Activated CD4-positive, alpha-beta T cell treated with anti-CD3 and anti-CD28 coated beads for 36 hours (primary cell): ENCODE measurements at regions of chr4 and their contacts with region 1.

Region 1: GRCh38 chr4:128917781-128918180 is 108.3 kb downstream of the JADE1 start:
- DNase-seq: no peak
- ATAC-seq: no peak
- H3K4me3 Mint-ChIP-seq: no peak overlapping the region
- H3K27ac Mint-ChIP-seq: no peak overlapping the region
- H3K4me1 Mint-ChIP-seq: peaks cover 14% of the 10 kb centered on the region
- H3K27me3 Mint-ChIP-seq: no peaks in the 10 kb centered on the region

Region 2: DNA sequence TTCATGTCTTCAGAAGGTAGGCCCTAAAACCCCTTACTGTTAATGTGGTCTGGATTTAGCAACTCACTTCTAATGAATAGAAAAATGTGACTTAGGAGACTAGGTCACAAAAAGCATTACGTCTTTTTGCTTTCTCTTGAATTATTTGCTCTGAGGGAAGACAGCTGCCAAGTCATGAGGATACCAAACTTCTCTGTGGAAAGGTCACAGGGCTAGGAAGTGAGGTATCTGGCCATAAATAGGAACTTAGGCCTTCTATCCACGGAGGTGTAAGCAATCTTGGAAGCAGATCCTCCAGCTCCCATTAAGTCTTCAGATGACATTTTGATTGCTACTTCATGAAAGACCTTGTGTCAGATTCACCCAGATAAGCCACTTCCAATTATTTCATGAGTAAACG is 12.3 kb after region 1 on chr4:
- CTCF ChIA-PET with region 1: no interaction called
- POLR2A ChIA-PET with region 1: interaction called, 10 read pairs
- intact Hi-C with region 1: no loop called
- DNase-seq: no peak
- ATAC-seq: no peak
- H3K4me3 Mint-ChIP-seq: no peak overlapping the region
- H3K27ac Mint-ChIP-seq: no peak overlapping the region
- H3K4me1 Mint-ChIP-seq: no peaks in the 10 kb centered on the region
- H3K27me3 Mint-ChIP-seq: no peaks in the 10 kb centered on the region

Region 3: GRCh38 chr4:128942607-128943006 is 24.8 kb after region 1 on chr4:
- CTCF ChIA-PET with region 1: no interaction called
- POLR2A ChIA-PET with region 1: no interaction called
- intact Hi-C with region 1: no loop called
- DNase-seq: no peak
- ATAC-seq: no peak
- H3K4me3 Mint-ChIP-seq: no peak overlapping the region
- H3K27ac Mint-ChIP-seq: no peak overlapping the region
- H3K4me1 Mint-ChIP-seq: no peaks in the 10 kb centered on the region
- H3K27me3 Mint-ChIP-seq: no peaks in the 10 kb centered on the region